Activated T-helper 1 cell treated with anti-CD3 and anti-CD28 coated beads, Interleukin-12 subunit alpha, Interleukin-12 subunit beta, Interleukin-2, Interleukin-4 antibody, amounts not matched to agents 30 ng/mL and 10 ng/mL and 1 ng/mL, durations not matched to agents 14 hours and 24 hours and 36 hours (primary cell): ENCODE measurements at regions of chr1 and their contacts with region 1.

Region 1: DNA sequence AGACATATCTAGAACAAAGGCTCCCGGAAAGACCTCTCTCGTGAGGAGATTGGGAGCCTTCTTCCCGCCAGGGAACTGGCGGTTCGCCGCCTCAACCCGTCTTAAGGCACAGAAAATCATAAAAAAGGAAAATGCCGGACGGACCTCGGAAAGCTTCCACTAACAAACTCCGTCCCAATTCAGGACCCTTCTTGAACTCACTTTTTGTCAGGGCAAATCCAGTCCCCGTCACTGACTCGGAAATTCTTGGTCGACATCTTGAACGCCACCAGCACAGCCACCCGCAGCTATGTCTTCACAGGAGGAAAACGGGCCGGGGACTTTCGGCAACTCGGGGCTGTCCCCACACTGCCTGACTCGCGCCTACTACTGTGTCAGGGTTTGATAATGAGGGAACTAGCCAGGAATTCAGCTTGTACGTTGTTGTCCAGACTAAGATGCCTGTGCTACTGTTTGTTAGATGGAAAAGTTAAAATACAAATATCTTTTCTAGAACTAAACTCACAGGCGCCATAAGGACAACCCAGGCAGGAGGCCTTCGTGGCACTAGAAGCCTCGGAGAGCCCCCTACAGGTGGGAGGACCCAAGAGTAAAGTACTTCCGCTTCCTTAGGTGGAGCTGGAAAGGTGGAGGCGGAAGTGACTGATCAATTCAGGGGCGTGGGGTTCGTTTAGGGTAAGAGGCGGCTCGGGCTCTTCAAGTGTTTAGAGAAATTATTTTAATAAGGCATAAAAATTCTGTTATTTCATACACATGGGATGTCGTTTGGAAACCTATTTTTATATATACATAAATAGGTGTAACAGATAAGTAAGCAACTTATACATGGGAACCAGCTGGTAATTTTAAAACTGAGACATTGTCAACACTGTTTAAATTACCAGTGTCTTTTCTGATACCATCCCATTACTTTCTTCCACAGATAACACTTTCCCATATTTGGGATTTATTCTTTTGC is at the start of gene ZRANB2:
- DNase-seq: peak; percentile 86
- H3K4me3 Mint-ChIP-seq: peak within 1 kb of the TSS; percentile 100
- H3K27ac Mint-ChIP-seq: peak within 1 kb of the TSS; percentile 98
- H3K4me1 Mint-ChIP-seq: peaks cover 28% of the 10 kb centered on the region
- H3K27me3 Mint-ChIP-seq: peaks cover 10% of the 10 kb centered on the region
- total RNA-seq, gene ZRANB2: 149 and 152 TPM in 2 replicates

Region 2: GRCh38 chr1:70205434-70206118 is 875.4 kb before region 1 on chr1 and contains the start of gene LRRC40:
- intact Hi-C with region 1: loop called (anchors 1 kb)
- DNase-seq: peak; percentile 96
- H3K4me3 Mint-ChIP-seq: peak within 1 kb of the TSS; percentile 100
- H3K27ac Mint-ChIP-seq: peak within 1 kb of the TSS; percentile 96
- H3K4me1 Mint-ChIP-seq: peaks cover 64% of the 10 kb centered on the region
- H3K27me3 Mint-ChIP-seq: no peaks in the 10 kb centered on the region
- total RNA-seq, gene LRRC40: 22.6 and 23.4 TPM in 2 replicates

Region 3: GRCh38 chr1:70354332-70355110 is 726.5 kb before region 1 on chr1 and contains the start of gene ANKRD13C:
- intact Hi-C with region 1: loop called (anchors 1 kb)
- DNase-seq: peak; percentile 88
- H3K4me3 Mint-ChIP-seq: peak within 1 kb of the TSS; percentile 89
- H3K27ac Mint-ChIP-seq: peak within 1 kb of the TSS; percentile 95
- H3K4me1 Mint-ChIP-seq: peaks cover 27% of the 10 kb centered on the region
- H3K27me3 Mint-ChIP-seq: no peaks in the 10 kb centered on the region
- total RNA-seq, gene ANKRD13C: 25.5 and 26.5 TPM in 2 replicates

Region 4: GRCh38 chr1:71068325-71069240 is 12.4 kb before region 1 on chr1:
- intact Hi-C with region 1: loop called (anchors 1 kb)
- DNase-seq: no peak
- H3K4me3 Mint-ChIP-seq: no peak overlapping the region
- H3K27ac Mint-ChIP-seq: peak overlapping the region; percentile 61
- H3K4me1 Mint-ChIP-seq: peaks cover 41% of the 10 kb centered on the region
- H3K27me3 Mint-ChIP-seq: no peaks in the 10 kb centered on the region

Region 5: DNA sequence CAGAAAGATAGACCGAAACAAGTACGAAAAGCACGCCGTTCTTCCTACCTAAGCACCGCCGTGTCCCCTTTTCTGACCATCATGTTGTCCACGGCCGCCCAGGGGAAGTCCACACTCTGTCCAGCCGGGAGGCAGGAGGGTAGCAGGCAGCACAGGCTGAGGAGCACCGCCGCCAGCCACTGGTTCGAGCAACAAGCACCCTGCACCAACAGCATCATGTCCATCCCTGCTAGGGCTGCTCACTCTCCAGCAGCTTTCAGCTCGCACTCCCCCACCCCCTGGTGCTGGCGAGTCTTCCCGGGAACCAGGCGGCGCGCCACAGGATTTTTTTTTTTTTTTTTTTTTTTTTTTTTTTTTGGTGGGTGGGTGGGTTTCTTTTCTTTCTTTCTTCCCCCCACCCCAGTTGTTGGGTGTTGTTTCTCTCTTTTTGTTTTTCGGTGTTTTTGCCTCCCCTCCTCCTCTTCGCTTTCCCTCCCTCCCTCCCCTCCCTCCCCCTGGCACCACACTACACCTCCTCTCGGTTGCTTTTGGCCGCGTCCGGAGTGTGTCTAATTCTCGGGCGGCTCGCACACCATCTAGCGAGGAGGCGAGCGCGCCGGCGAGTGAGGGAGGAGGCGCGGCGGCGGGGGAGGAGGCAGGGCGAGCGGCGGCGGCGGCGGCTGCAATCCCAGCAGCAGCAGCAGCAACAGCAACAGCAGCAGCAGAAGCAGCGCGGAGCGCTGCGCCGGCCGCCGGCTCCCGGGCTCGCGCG is 1201.4 kb after region 1 on chr1 and contains the start of gene NEGR1:
- intact Hi-C with region 1: loop called (anchors 10 kb)
- DNase-seq: peak; percentile 48
- H3K4me3 Mint-ChIP-seq: peak within 1 kb of the TSS; percentile 75
- H3K27ac Mint-ChIP-seq: peak within 1 kb of the TSS; percentile 18
- H3K4me1 Mint-ChIP-seq: peaks cover 14% of the 10 kb centered on the region
- H3K27me3 Mint-ChIP-seq: peaks cover 35% of the 10 kb centered on the region
- total RNA-seq, gene NEGR1: not detected in 2 replicates